ENCODE measurements at regions of chr10 and their contacts with region 1.

Region 1: GRCh38 chr10:69639291-69640195 is 9.5 kb downstream of the FAM241B start:
- DNase-seq: peak; percentile 69
- H3K4me3 ChIP-seq: no peak overlapping the region
- H3K27ac ChIP-seq: no peak overlapping the region
- H3K4me1 ChIP-seq: no peaks in the 10 kb centered on the region
- H3K27me3 ChIP-seq: no peaks in the 10 kb centered on the region
- CTCF ChIP-seq: peak; percentile 87

Region 2: GRCh38 chr10:69222157-69223027 is 417.2 kb before region 1 on chr10:
- CTCF ChIA-PET with region 1: interaction called, 13 read pairs
- POLR2A ChIA-PET with region 1: no interaction called
- intact Hi-C with region 1: no loop called
- DNase-seq: peak; percentile 81
- H3K4me3 ChIP-seq: no peak overlapping the region
- H3K27ac ChIP-seq: peak overlapping the region; percentile 33
- H3K4me1 ChIP-seq: peaks cover 21% of the 10 kb centered on the region
- H3K27me3 ChIP-seq: no peaks in the 10 kb centered on the region
- CTCF ChIP-seq: peak; percentile 82

Region 3: GRCh38 chr10:69515699-69516259 is 123.8 kb before region 1 on chr10:
- CTCF ChIA-PET with region 1: interaction called, 13 read pairs
- POLR2A ChIA-PET with region 1: interaction called, 3 read pairs
- intact Hi-C with region 1: loop called (anchors 1 kb)
- DNase-seq: peak; percentile 76
- H3K4me3 ChIP-seq: no peak overlapping the region
- H3K27ac ChIP-seq: no peak overlapping the region
- H3K4me1 ChIP-seq: no peaks in the 10 kb centered on the region
- H3K27me3 ChIP-seq: peaks cover 29% of the 10 kb centered on the region
- CTCF ChIP-seq: peak; percentile 90

Region 4: GRCh38 chr10:69657430-69657829 is 17.9 kb after region 1 on chr10:
- CTCF ChIA-PET with region 1: no interaction called
- POLR2A ChIA-PET with region 1: no interaction called
- intact Hi-C with region 1: no loop called
- DNase-seq: no peak
- H3K4me3 ChIP-seq: no peak overlapping the region
- H3K27ac ChIP-seq: no peak overlapping the region
- H3K4me1 ChIP-seq: no peaks in the 10 kb centered on the region
- H3K27me3 ChIP-seq: peaks cover 6% of the 10 kb centered on the region
- CTCF ChIP-seq: no peak

Measured in A673 (cell line).